ENCODE measurements at regions of chr3 and their contacts with region 1.

Region 1: GRCh38 chr3:192957441-192958021 is 39.9 kb upstream of the MB21D2 start:
- DNase-seq: peak; percentile 22
- H3K4me3 Mint-ChIP-seq: peak overlapping the region; percentile 50
- H3K27ac Mint-ChIP-seq: peak overlapping the region; percentile 82
- H3K4me1 Mint-ChIP-seq: peaks cover 32% of the 10 kb centered on the region
- H3K27me3 Mint-ChIP-seq: no peaks in the 10 kb centered on the region

Region 2: DNA sequence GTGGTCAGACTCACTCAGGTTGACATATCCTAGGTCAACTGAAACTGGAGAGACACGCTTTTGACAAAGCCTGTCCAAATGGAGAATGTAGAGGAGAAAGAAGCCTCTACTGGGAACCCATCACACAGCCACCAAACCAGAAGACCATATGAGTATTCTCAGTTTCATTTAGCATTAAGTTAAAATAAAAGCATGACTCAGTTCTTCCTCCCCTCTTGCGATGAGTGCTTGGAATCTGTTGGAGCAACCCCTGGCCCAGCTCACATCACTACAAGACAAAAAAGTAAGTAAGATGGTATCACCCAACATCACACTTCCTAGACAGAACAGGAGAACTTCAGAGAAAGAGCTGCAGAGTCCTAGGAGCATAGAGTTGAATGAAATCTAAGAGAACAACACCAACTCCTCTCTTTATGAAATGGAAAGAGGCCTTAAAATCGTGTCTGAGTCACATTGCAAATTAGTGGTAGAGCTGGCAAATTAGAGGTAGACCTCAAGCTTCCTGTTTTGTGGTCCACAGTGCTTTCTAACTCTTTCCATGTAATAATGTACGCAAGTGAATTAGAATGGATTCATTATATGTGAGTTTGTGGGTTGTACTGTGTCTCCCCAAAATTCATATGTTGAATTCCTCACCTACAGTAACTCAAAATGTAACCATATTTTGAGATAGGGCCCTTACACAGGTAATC is 281.4 kb before region 1 on chr3:
- intact Hi-C with region 1: loop called (anchors 1 kb)
- DNase-seq: no peak
- H3K4me3 Mint-ChIP-seq: no peak overlapping the region
- H3K27ac Mint-ChIP-seq: peak overlapping the region; percentile 97
- H3K4me1 Mint-ChIP-seq: peaks cover 12% of the 10 kb centered on the region
- H3K27me3 Mint-ChIP-seq: peaks cover 12% of the 10 kb centered on the region

Region 3: GRCh38 chr3:192831111-192831644 is 126.4 kb before region 1 on chr3:
- intact Hi-C with region 1: loop called (anchors 1 kb)
- DNase-seq: peak; percentile 15
- H3K4me3 Mint-ChIP-seq: peak overlapping the region; percentile 25
- H3K27ac Mint-ChIP-seq: peak overlapping the region; percentile 88
- H3K4me1 Mint-ChIP-seq: peaks cover 67% of the 10 kb centered on the region
- H3K27me3 Mint-ChIP-seq: no peaks in the 10 kb centered on the region

Region 4: GRCh38 chr3:192887047-192887446 is 70.5 kb before region 1 on chr3:
- intact Hi-C with region 1: loop called (anchors 1 kb)
- DNase-seq: no peak
- H3K4me3 Mint-ChIP-seq: peak overlapping the region; percentile 54
- H3K27ac Mint-ChIP-seq: peak overlapping the region; percentile 69
- H3K4me1 Mint-ChIP-seq: peaks cover 82% of the 10 kb centered on the region
- H3K27me3 Mint-ChIP-seq: peaks cover 2% of the 10 kb centered on the region

Region 5: GRCh38 chr3:192933779-192934460 is 23.6 kb before region 1 on chr3:
- intact Hi-C with region 1: loop called (anchors 2 kb)
- DNase-seq: no peak
- H3K4me3 Mint-ChIP-seq: no peak overlapping the region
- H3K27ac Mint-ChIP-seq: peak overlapping the region; percentile 53
- H3K4me1 Mint-ChIP-seq: peaks cover 12% of the 10 kb centered on the region
- H3K27me3 Mint-ChIP-seq: peaks cover 4% of the 10 kb centered on the region

Region 6: DNA sequence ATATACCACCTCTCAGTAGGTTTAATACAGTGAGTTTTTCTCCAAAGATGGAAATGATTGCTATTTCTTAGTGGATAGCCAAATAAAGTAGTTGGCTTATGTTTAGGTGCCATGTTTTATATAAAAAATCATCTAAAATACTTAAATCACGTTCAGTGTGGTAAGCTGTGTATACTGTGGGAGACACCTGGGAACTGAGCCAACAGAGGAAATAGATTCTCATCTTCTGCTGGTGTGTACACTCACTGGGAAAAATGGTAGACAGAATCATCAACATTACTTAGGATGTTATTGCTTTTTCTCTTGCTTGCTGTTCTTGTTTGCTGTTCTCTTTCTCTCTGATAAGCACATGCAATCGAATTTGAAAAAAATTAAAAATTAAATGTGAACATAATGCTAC is 72.7 kb after region 1 on chr3:
- intact Hi-C with region 1: no loop called
- DNase-seq: no peak
- H3K4me3 Mint-ChIP-seq: no peak overlapping the region
- H3K27ac Mint-ChIP-seq: no peak overlapping the region
- H3K4me1 Mint-ChIP-seq: peaks cover 15% of the 10 kb centered on the region
- H3K27me3 Mint-ChIP-seq: peaks cover 7% of the 10 kb centered on the region

Region 7: GRCh38 chr3:193040836-193041672 is 83.5 kb after region 1 on chr3:
- intact Hi-C with region 1: loop called (anchors 5 kb)
- DNase-seq: no peak
- H3K4me3 Mint-ChIP-seq: no peak overlapping the region
- H3K27ac Mint-ChIP-seq: no peak overlapping the region
- H3K4me1 Mint-ChIP-seq: peaks cover 10% of the 10 kb centered on the region
- H3K27me3 Mint-ChIP-seq: peaks cover 8% of the 10 kb centered on the region

Measured in activated T-helper 1 cell treated with anti-CD3 and anti-CD28 coated beads, Interleukin-12 subunit alpha, Interleukin-12 subunit beta, Interleukin-2, Interleukin-4 antibody, amounts not matched to agents 30 ng/mL and 10 ng/mL and 1 ng/mL, durations not matched to agents 14 hours and 24 hours and 36 hours (primary cell).